ENCODE measurements at regions of chr10 and their contacts with region 1.

Region 1: DNA sequence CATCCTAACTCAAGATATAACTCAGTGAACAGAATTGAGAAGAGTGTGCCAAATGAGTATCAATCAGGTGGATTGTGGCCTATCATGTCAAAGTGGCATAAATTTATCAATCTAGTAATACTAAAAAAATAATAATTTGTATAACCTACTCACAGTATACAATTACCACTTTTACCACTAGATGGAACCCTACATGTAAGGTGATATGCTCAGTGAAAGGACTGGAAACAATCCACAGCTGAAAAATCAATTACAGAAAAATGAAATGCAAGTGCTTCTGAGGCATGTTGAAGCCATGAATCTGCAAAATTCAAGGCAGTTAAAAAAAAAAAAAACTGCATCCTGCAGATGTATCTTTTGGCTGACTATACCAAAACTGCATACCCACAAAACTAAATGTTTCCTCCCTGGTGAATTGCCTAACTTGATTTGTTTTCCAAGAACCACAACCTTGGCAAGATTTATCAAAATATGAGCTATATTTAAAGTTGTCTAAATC is 13.9 kb downstream of the ARHGAP19 start:
- DNase-seq: peak in 4 of 5 donors; percentile 47 to 54 (median 53)
- H3K4me3 ChIP-seq: no peak overlapping the region
- H3K4me3 Mint-ChIP-seq: no peak overlapping the region
- H3K27ac ChIP-seq: no peak overlapping the region
- H3K27ac Mint-ChIP-seq: peak overlapping the region in 1 of 7 donors; percentile 51
- H3K4me1 ChIP-seq: peaks cover 4% of the 10 kb centered on the region
- H3K4me1 Mint-ChIP-seq: peaks cover 6 to 12% (median 9%) of the 10 kb centered on the region in 4 donors
- H3K27me3 ChIP-seq: no peaks in the 10 kb centered on the region
- H3K27me3 Mint-ChIP-seq: no peaks in the 10 kb centered on the region

Region 2: DNA sequence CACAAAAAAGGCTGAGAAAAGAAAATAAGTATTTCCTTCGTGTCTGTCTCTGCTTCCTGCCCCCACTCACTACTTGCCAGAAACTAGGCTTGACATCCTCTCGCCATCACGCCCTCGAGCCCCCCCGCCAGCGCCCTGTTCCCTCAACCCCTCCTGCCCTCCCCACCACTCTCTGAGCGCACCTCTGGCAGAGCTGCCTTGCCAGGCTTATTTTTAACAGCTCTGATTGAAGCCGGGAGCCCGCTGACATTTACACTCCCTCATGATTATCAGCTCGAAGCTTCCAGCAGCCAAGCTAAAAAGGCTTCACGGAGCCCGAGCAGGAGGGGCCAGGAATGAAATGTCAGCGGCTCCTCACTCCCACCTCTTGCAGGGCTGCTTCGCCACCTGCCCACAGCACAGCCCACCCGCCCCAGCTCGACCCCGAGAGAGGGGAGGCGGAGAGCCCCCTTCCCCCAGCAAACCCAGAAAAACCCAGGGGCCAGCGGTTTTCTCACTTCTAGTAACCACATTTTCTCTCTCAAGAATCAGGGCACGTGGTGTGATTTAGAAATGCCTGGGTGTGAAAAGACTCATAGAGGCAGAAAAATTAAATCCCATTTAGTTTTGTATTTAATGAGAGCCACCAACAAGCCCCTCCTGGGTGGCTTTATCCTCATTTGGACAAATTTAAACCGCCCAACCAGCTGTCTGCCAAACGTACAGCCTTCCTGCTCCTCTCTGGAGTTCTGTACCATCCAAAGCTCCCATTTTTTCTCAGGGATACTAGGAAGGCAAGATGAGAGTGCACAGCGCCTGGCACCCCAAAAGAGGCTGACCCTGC is 182.1 kb before region 1 on chr10:
- CTCF ChIA-PET with region 1: no interaction called
- POLR2A ChIA-PET with region 1: no interaction called
- intact Hi-C with region 1: no loop called
- DNase-seq: peak in 3 of 5 donors; percentile 6 to 20 (median 6)
- H3K4me3 ChIP-seq: no peak overlapping the region
- H3K4me3 Mint-ChIP-seq: peak overlapping the region in 7 of 8 donors; percentile 51 to 80 (median 66)
- H3K27ac ChIP-seq: no peak overlapping the region
- H3K27ac Mint-ChIP-seq: peak overlapping the region in 4 of 7 donors; percentile 1 to 64 (median 29)
- H3K4me1 ChIP-seq: peaks cover 8% of the 10 kb centered on the region
- H3K4me1 Mint-ChIP-seq: peaks cover 3 to 26% (median 14%) of the 10 kb centered on the region in 4 donors
- H3K27me3 ChIP-seq: no peaks in the 10 kb centered on the region
- H3K27me3 Mint-ChIP-seq: peaks cover 10 to 14% of the 10 kb centered on the region in 2 donors

Region 3: GRCh38 chr10:97292097-97292862 is 13.7 kb after region 1 on chr10 and contains the start of gene ARHGAP19:
- CTCF ChIA-PET with region 1: interaction called, 28 read pairs
- POLR2A ChIA-PET with region 1: interaction called, 6 read pairs
- intact Hi-C with region 1: no loop called
- DNase-seq: peak; percentile 94 to 98 (median 95)
- H3K4me3 ChIP-seq: peak within 1 kb of the TSS; percentile 76 to 85
- H3K4me3 Mint-ChIP-seq: peak within 1 kb of the TSS; percentile 90 to 99 (median 94)
- H3K27ac ChIP-seq: peak within 1 kb of the TSS; percentile 78
- H3K27ac Mint-ChIP-seq: peak within 1 kb of the TSS; percentile 85 to 97 (median 95)
- H3K4me1 ChIP-seq: peaks cover 11% of the 10 kb centered on the region
- H3K4me1 Mint-ChIP-seq: peaks cover 8 to 25% (median 20%) of the 10 kb centered on the region in 4 donors
- H3K27me3 ChIP-seq: no peaks in the 10 kb centered on the region
- H3K27me3 Mint-ChIP-seq: peaks cover 1 to 3% of the 10 kb centered on the region in 2 donors
- total RNA-seq, gene ARHGAP19: 17.0 to 19.3 TPM

Region 4: GRCh38 chr10:97327348-97328294 is 49.1 kb after region 1 on chr10:
- CTCF ChIA-PET with region 1: interaction called, 31 read pairs
- POLR2A ChIA-PET with region 1: no interaction called
- intact Hi-C with region 1: loop called (anchors 2 kb)
- DNase-seq: no peak
- H3K4me3 ChIP-seq: no peak overlapping the region
- H3K4me3 Mint-ChIP-seq: no peak overlapping the region
- H3K27ac ChIP-seq: no peak overlapping the region
- H3K27ac Mint-ChIP-seq: peak overlapping the region in 4 of 7 donors; percentile 50 to 79 (median 68)
- H3K4me1 ChIP-seq: peaks cover 34% of the 10 kb centered on the region
- H3K4me1 Mint-ChIP-seq: peaks cover 22 to 53% (median 33%) of the 10 kb centered on the region in 4 donors
- H3K27me3 ChIP-seq: no peaks in the 10 kb centered on the region
- H3K27me3 Mint-ChIP-seq: no peaks in the 10 kb centered on the region

Region 5: DNA sequence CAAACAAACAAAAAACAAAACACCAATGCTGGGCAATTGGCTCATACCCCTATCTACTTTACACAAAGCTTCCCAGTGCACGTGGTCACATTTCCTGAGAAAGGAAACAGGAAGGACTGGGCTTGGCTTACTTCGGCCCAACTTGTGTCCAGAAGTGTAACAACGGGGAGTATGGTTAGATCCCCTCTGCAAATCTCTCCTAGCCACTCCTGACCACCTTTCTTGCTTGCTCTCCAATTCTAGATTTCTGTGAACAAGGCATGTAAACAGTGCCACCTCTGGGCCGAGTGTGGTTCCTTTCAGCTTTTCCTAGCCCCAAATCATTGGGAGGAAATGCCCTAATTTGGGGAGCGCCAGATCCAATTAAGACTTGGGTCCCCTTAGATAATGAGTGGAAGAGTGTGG is 77.0 kb after region 1 on chr10:
- CTCF ChIA-PET with region 1: interaction called, 103 read pairs
- POLR2A ChIA-PET with region 1: interaction called, 7 read pairs
- intact Hi-C with region 1: loop called (anchors 2 kb)
- DNase-seq: peak in 4 of 5 donors; percentile 16 to 30 (median 20)
- H3K4me3 ChIP-seq: no peak overlapping the region
- H3K4me3 Mint-ChIP-seq: no peak overlapping the region
- H3K27ac ChIP-seq: no peak overlapping the region
- H3K27ac Mint-ChIP-seq: peak overlapping the region in 3 of 7 donors; percentile 22 to 52 (median 48)
- H3K4me1 ChIP-seq: no peaks in the 10 kb centered on the region
- H3K4me1 Mint-ChIP-seq: no peaks in the 10 kb centered on the region
- H3K27me3 ChIP-seq: no peaks in the 10 kb centered on the region
- H3K27me3 Mint-ChIP-seq: no peaks in the 10 kb centered on the region

Region 6: GRCh38 chr10:97400665-97401454 is 122.3 kb after region 1 on chr10 and contains the start of gene RRP12:
- CTCF ChIA-PET with region 1: interaction called, 17 read pairs
- POLR2A ChIA-PET with region 1: no interaction called
- intact Hi-C with region 1: loop called (anchors 2 kb)
- DNase-seq: peak; percentile 89 to 97 (median 95)
- H3K4me3 ChIP-seq: peak within 1 kb of the TSS; percentile 71
- H3K4me3 Mint-ChIP-seq: peak within 1 kb of the TSS; percentile 95 to 99 (median 96)
- H3K27ac ChIP-seq: peak within 1 kb of the TSS; percentile 88
- H3K27ac Mint-ChIP-seq: peak within 1 kb of the TSS; percentile 94 to 99 (median 99)
- H3K4me1 ChIP-seq: peaks cover 15% of the 10 kb centered on the region
- H3K4me1 Mint-ChIP-seq: peaks cover 11 to 23% (median 15%) of the 10 kb centered on the region in 4 donors
- H3K27me3 ChIP-seq: no peaks in the 10 kb centered on the region
- H3K27me3 Mint-ChIP-seq: no peaks in the 10 kb centered on the region
- total RNA-seq, gene RRP12: 18.2 to 20.0 TPM

Region 7: DNA sequence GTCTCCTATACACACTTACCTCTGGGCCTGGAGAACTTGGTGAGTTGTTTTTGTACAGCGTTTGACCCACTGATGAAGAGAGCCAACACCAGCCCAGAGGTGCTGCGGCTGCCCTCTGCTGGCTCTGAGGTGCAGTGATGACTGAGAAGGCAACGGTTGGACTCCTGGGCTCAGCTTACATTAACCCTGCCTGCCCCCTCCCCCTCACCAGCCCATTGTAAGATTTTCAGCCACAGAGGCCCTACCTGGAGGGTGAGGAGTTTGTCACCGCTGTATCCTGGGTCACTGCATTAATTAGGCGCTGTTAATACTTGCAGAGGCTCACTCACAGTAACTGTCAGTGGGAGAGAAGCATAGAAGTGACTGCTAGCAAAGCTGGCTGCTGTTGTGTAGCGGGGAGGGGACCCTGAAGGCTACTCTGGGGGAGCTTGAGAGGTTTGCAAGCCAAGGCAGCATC is 275.1 kb after region 1 on chr10:
- CTCF ChIA-PET with region 1: interaction called, 3 read pairs
- POLR2A ChIA-PET with region 1: no interaction called
- intact Hi-C with region 1: loop called (anchors 2 kb)
- DNase-seq: peak in 4 of 5 donors; percentile 36 to 47 (median 40)
- H3K4me3 ChIP-seq: no peak overlapping the region
- H3K4me3 Mint-ChIP-seq: no peak overlapping the region
- H3K27ac ChIP-seq: no peak overlapping the region
- H3K27ac Mint-ChIP-seq: no peak overlapping the region
- H3K4me1 ChIP-seq: no peaks in the 10 kb centered on the region
- H3K4me1 Mint-ChIP-seq: peaks cover 0 to 3% (median under 1%) of the 10 kb centered on the region in 4 donors
- H3K27me3 ChIP-seq: no peaks in the 10 kb centered on the region
- H3K27me3 Mint-ChIP-seq: no peaks in the 10 kb centered on the region